Activated CD4-positive, alpha-beta T cell treated with anti-CD3 and anti-CD28 coated beads for 36 hours (primary cell): ENCODE measurements at regions of chr17 and their contacts with region 1.

Region 1: DNA sequence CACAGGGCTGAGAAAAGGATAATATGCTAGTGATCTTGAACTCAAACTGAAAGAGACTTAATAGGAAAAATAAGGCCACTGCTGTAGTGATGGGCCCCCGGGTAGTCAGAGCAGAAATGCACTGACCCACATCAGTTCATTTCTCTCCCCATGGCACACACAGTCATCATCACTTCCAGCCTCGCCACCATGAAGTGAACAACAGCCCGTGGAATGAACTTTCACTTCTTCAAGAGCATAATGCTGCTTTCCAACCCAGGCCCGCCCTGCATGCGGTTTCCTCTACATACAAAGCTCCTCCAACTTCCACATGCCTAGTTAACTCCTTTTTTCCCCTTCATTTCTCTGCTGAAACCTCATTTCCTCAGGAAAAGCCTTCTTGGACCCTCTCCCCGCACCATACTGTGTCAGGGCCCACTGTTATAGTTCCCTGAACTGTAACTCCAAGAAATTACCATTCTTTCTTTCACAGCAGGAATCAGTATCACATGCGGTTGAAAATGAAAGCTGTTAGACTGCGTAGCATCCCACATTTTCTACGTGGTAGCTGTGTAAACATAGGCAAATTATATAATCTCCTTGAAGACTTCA is 65.8 kb upstream of the SMIM36 start:
- DNase-seq: peak; percentile 87
- ATAC-seq: peak; percentile 90
- H3K4me3 Mint-ChIP-seq: no peak overlapping the region
- H3K27ac Mint-ChIP-seq: no peak overlapping the region
- H3K4me1 Mint-ChIP-seq: peaks cover 21% of the 10 kb centered on the region
- H3K27me3 Mint-ChIP-seq: peaks cover 8% of the 10 kb centered on the region

Region 2: DNA sequence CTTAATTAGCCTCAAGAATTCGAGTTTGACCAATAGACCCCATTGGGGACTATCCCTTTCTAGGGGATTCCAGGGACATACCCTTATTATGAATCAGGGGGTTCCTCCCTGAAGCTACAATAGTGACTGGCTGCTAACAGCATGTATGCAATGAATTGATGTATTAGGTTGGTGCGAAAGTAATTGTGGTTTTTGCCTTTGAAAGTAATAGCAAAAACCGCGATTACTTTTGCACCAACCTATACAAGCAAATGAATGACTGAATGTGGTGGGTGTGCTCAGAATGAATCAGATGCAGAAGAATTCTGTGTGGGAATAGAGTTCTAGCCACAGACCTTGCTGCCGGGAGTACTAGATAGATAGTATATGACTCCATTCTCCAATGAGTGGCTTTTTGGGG is 235.7 kb before region 1 on chr17:
- CTCF ChIA-PET with region 1: no interaction called
- POLR2A ChIA-PET with region 1: no interaction called
- intact Hi-C with region 1: loop called (anchors 1 to 5 kb)
- DNase-seq: peak; percentile 27
- ATAC-seq: peak; percentile 49
- H3K4me3 Mint-ChIP-seq: no peak overlapping the region
- H3K27ac Mint-ChIP-seq: no peak overlapping the region
- H3K4me1 Mint-ChIP-seq: peaks cover 18% of the 10 kb centered on the region
- H3K27me3 Mint-ChIP-seq: peaks cover 20% of the 10 kb centered on the region

Region 3: GRCh38 chr17:55458977-55459376 is 118.1 kb before region 1 on chr17:
- CTCF ChIA-PET with region 1: no interaction called
- POLR2A ChIA-PET with region 1: no interaction called
- intact Hi-C with region 1: loop called in 1 of 2 experiments (anchors 1 kb)
- DNase-seq: peak; percentile 83
- ATAC-seq: peak; percentile 99
- H3K4me3 Mint-ChIP-seq: no peak overlapping the region
- H3K27ac Mint-ChIP-seq: no peak overlapping the region
- H3K4me1 Mint-ChIP-seq: peaks cover 24% of the 10 kb centered on the region
- H3K27me3 Mint-ChIP-seq: peaks cover 14% of the 10 kb centered on the region

Region 4: GRCh38 chr17:55549140-55549539 is 28.0 kb before region 1 on chr17:
- CTCF ChIA-PET with region 1: interaction called, 3 read pairs
- POLR2A ChIA-PET with region 1: no interaction called
- intact Hi-C with region 1: loop called (anchors 1 to 5 kb)
- DNase-seq: no peak
- ATAC-seq: no peak
- H3K4me3 Mint-ChIP-seq: no peak overlapping the region
- H3K27ac Mint-ChIP-seq: no peak overlapping the region
- H3K4me1 Mint-ChIP-seq: peaks cover 21% of the 10 kb centered on the region
- H3K27me3 Mint-ChIP-seq: peaks cover 40% of the 10 kb centered on the region

Region 5: GRCh38 chr17:55664287-55664686 is 87.2 kb after region 1 on chr17:
- CTCF ChIA-PET with region 1: no interaction called
- POLR2A ChIA-PET with region 1: no interaction called
- intact Hi-C with region 1: no loop called
- DNase-seq: no peak
- ATAC-seq: no peak
- H3K4me3 Mint-ChIP-seq: no peak overlapping the region
- H3K27ac Mint-ChIP-seq: no peak overlapping the region
- H3K4me1 Mint-ChIP-seq: no peaks in the 10 kb centered on the region
- H3K27me3 Mint-ChIP-seq: peaks cover 24% of the 10 kb centered on the region

Region 6: DNA sequence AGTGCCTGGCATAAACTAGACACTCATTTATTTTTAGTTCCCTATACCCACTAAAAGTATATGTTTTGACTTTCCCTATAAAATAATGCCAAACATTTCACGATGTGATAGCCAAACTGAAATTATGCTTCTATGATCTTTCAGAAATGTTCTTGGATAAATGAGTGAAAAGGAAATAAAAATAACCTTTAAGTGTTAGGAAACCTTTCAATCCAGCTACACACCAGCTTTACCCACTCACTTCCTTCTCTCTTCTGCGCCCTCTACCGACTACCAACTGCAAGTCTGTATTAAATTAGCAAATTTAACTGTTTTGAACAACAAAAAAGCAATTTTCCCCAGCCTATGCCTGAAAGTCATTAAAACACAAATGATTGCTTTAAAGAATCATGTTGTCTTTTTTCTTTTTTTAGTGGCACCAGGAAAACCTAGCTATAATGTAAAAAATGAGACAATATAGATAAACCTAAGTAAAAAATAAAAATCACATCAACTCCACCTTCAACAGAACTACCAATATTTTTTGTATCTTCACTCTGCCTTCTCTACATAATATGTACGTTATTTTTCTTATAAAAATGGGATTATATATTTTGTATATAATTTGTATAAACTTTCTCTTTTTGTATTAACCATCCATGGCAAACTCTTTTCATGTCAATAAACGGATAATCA is 158.8 kb after region 1 on chr17:
- CTCF ChIA-PET with region 1: interaction called, 6 read pairs
- POLR2A ChIA-PET with region 1: interaction called, 4 read pairs
- intact Hi-C with region 1: loop called (anchors 1 to 2 kb)
- DNase-seq: peak; percentile 59
- ATAC-seq: no peak
- H3K4me3 Mint-ChIP-seq: no peak overlapping the region
- H3K27ac Mint-ChIP-seq: no peak overlapping the region
- H3K4me1 Mint-ChIP-seq: peaks cover 28% of the 10 kb centered on the region
- H3K27me3 Mint-ChIP-seq: peaks cover 38% of the 10 kb centered on the region

Region 7: GRCh38 chr17:56034201-56034635 is 457.1 kb after region 1 on chr17:
- CTCF ChIA-PET with region 1: no interaction called
- POLR2A ChIA-PET with region 1: no interaction called
- intact Hi-C with region 1: no loop called
- DNase-seq: no peak
- ATAC-seq: no peak
- H3K4me3 Mint-ChIP-seq: no peak overlapping the region
- H3K27ac Mint-ChIP-seq: no peak overlapping the region
- H3K4me1 Mint-ChIP-seq: peaks cover 2% of the 10 kb centered on the region
- H3K27me3 Mint-ChIP-seq: peaks cover 22% of the 10 kb centered on the region

Region 8: DNA sequence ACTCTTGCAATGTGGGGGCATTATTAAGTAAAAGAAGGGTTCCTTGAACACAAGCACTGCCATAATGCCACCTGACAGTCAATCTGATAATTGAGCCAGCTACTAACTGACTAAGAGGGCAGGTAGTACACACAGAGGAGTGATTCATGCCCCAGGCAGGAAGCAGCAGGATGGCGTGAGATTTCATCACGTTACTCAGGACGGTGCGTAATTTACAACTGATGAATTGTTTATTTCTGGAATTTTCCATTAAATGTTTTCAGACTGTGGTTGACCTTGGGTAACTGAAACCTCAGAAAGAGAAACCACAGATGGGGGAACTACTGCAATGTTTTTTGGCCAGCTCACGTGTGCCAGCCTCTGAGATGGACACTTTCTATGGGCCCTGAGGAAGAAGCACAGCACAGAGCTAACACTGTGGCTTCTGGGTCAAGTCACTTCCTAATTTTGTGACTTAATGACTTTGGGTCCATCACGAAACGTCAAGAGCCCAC is 1209.9 kb after region 1 on chr17:
- CTCF ChIA-PET with region 1: no interaction called
- POLR2A ChIA-PET with region 1: no interaction called
- intact Hi-C with region 1: loop called in 1 of 2 experiments (anchors 2 kb)
- DNase-seq: peak; percentile 82
- ATAC-seq: peak; percentile 98
- H3K4me3 Mint-ChIP-seq: peak overlapping the region; percentile 37
- H3K27ac Mint-ChIP-seq: peak overlapping the region; percentile 97
- H3K4me1 Mint-ChIP-seq: peaks cover 34% of the 10 kb centered on the region
- H3K27me3 Mint-ChIP-seq: peaks cover 1% of the 10 kb centered on the region